ENCODE measurements at regions of chr9 and their contacts with region 1.

Region 1: GRCh38 chr9:4382722-4383317 is 83.0 kb upstream of the GLIS3 start:
- DNase-seq: peak in 1 of 2 experiments; percentile 28
- ATAC-seq: peak in 1 of 2 experiments; percentile 72; a peak in 3 of 6 replicates
- H3K4me3 ChIP-seq: no peak overlapping the region
- H3K27ac ChIP-seq: no peak overlapping the region
- H3K4me1 ChIP-seq: no peaks in the 10 kb centered on the region
- CTCF ChIP-seq: peak; percentile 70
- EP300 ChIP-seq: no peak
- POLR2A ChIP-seq: no peak
- RAD21 ChIP-seq: peak; percentile 82 to 84

Region 2: DNA sequence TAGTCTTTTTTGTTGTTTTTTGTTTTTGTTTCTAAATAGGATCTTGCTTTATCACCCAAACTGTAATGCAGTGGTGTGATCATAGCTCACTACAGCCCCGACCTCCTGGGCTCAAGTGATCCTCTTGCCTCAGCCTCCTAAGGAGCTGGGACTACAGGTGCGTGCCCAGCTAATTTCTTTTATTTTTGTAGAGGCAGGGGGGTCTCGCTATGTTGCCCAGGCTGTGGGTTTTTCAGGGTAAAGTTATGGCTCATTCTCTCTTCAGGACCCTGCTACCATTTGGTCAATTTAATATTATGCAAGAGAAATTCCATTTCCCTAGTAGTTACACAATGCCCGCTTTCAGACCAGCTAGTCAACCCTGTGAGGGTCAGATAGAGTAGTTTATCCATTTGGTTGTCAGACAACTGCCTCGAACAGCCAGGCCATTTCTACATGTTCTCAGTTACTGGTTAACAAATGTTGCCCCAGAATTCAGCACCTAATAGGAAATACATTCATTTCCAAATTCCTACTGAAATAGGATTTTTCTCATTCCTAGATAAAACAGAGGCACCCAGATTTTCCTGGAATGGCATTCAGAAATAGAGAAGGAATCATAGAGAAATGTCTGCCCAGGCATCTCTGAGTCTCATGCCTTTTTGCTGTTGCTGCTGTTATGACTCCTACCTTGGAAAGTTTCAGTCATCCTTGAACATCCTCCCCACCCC is 76.6 kb before region 1 on chr9:
- CTCF ChIA-PET with region 1: no interaction called
- POLR2A ChIA-PET with region 1: no interaction called
- DNase-seq: no peak
- ATAC-seq: no peak
- H3K4me3 ChIP-seq: no peak overlapping the region
- H3K27ac ChIP-seq: peak overlapping the region in 1 of 2 experiments; percentile 29; a peak in 3 of 6 replicates
- H3K4me1 ChIP-seq: peaks cover 48% of the 10 kb centered on the region
- CTCF ChIP-seq: no peak
- EP300 ChIP-seq: no peak
- POLR2A ChIP-seq: no peak
- RAD21 ChIP-seq: no peak

Region 3: GRCh38 chr9:4356306-4356705 is 26.5 kb before region 1 on chr9:
- CTCF ChIA-PET with region 1: no interaction called
- POLR2A ChIA-PET with region 1: no interaction called
- DNase-seq: no peak
- ATAC-seq: no peak
- H3K4me3 ChIP-seq: no peak overlapping the region
- H3K27ac ChIP-seq: no peak overlapping the region
- H3K4me1 ChIP-seq: no peaks in the 10 kb centered on the region
- CTCF ChIP-seq: no peak
- EP300 ChIP-seq: no peak
- POLR2A ChIP-seq: no peak
- RAD21 ChIP-seq: no peak

Region 4: GRCh38 chr9:4508246-4508906 is 125.6 kb after region 1 on chr9:
- CTCF ChIA-PET with region 1: no interaction called
- POLR2A ChIA-PET with region 1: no interaction called
- DNase-seq: no peak
- ATAC-seq: no peak
- H3K4me3 ChIP-seq: no peak overlapping the region
- H3K27ac ChIP-seq: no peak overlapping the region
- H3K4me1 ChIP-seq: no peaks in the 10 kb centered on the region
- CTCF ChIP-seq: no peak
- EP300 ChIP-seq: no peak
- POLR2A ChIP-seq: no peak
- RAD21 ChIP-seq: no peak

Region 5: DNA sequence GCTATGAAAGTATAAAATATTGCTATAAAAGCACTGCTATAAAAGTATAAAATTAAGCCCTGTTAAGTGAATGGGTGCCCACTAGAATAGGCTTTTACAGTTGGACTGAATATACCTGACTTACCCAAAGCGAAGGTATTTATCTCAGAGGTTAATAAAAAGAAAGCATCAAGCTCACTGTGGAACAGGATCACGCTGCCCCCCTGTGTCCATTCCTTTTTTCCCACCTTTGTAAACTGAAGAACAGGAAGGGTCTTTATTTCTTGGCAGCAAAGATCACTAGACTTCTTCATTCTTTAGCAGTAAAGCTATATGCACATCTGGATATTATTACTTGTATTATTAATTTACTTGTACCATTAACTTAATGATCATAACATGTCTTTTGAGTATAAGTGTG is 257.2 kb after region 1 on chr9:
- CTCF ChIA-PET with region 1: interaction called, 18 read pairs
- POLR2A ChIA-PET with region 1: no interaction called
- DNase-seq: peak in 1 of 2 experiments; percentile 21
- ATAC-seq: peak in 1 of 2 experiments; percentile 53; a peak in 1 of 6 replicates
- H3K4me3 ChIP-seq: no peak overlapping the region
- H3K27ac ChIP-seq: no peak overlapping the region
- H3K4me1 ChIP-seq: no peaks in the 10 kb centered on the region
- CTCF ChIP-seq: peak; percentile 43
- EP300 ChIP-seq: no peak
- POLR2A ChIP-seq: no peak
- RAD21 ChIP-seq: peak; percentile 49 to 58; a peak in 4 of 5 replicates

Region 6: DNA sequence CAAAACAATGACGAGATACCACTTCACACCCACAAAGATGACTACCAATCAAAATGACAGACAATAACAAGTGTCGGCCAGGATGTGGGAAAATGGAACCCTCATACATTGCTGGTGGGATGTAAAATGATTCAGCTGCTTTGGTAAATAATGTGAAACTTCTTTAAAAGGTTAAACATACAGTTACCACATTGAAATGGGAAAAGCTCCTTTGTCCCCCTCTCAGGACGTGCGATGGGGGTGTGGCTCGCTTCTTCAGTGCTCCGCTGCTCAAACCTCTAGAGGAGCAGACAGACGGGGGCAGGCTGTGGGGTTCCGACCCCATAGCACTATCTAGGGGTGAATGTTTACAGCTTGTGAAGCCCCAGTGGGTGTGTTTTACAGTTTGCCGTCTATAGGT is 271.3 kb after region 1 on chr9:
- CTCF ChIA-PET with region 1: no interaction called
- POLR2A ChIA-PET with region 1: no interaction called
- DNase-seq: no peak
- ATAC-seq: no peak
- H3K4me3 ChIP-seq: no peak overlapping the region
- H3K27ac ChIP-seq: no peak overlapping the region
- H3K4me1 ChIP-seq: peaks cover 17% of the 10 kb centered on the region; the same call in 2 of the 3 replicates
- CTCF ChIP-seq: no peak
- EP300 ChIP-seq: no peak
- POLR2A ChIP-seq: no peak
- RAD21 ChIP-seq: no peak